ENCODE measurements at regions of chr10 and their contacts with region 1.

Region 1: GRCh38 chr10:68721673-68722335 is 765 bp downstream of the CCAR1 start:
- DNase-seq: no peak
- ATAC-seq: peak; percentile 59
- H3K4me3 ChIP-seq: peak overlapping the region; percentile 89 to 96 (median 93)
- H3K27ac ChIP-seq: peak overlapping the region; percentile 94
- H3K4me1 ChIP-seq: peaks cover 8% of the 10 kb centered on the region
- H3K27me3 ChIP-seq: no peaks in the 10 kb centered on the region; a peak in 1 of 5 replicates
- CTCF ChIP-seq: no peak
- EP300 ChIP-seq: no peak
- POLR2A ChIP-seq: no peak
- RAD21 ChIP-seq: no peak

Region 2: DNA sequence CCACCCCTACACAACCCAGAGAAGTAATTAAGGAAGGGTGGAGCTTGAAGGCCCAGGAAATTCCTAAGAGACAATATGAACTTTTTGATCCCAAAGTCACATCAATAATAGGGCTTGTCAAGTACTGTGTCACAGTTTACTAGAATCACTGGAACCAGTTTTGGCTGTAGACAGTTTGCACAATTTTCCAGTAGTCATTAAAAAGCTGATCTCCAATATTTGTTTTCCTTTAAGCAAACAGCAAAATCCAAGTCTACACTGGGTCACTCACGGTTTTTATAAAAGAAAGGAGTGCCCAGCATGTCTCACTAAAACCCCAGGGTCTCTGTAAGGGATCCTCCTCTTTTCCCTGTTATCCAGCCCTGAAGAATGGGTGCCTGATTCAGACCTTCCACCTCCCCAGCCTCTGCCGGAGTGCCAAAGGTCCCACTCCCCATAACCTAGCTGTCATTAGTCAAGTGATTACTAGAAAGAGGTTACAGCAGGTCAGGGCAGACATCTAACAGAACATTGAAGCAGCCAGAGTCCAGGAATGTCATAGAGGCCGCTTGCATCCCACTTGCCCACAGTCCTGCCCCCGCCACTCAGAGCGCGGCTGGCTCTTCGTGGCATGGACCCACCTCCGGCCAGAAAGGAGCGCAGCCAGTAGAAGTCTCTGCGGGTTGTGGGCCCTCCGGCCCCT is 195.0 kb before region 1 on chr10:
- CTCF ChIA-PET with region 1: no interaction called
- POLR2A ChIA-PET with region 1: no interaction called
- in situ Hi-C with region 1: no loop called
- intact Hi-C with region 1: loop called (anchors 1 kb)
- DNase-seq: peak; percentile 56
- ATAC-seq: peak; percentile 84
- H3K4me3 ChIP-seq: peak overlapping the region; percentile 80 to 88 (median 81)
- H3K27ac ChIP-seq: peak overlapping the region; percentile 93
- H3K4me1 ChIP-seq: peaks cover 18% of the 10 kb centered on the region
- H3K27me3 ChIP-seq: no peaks in the 10 kb centered on the region
- CTCF ChIP-seq: no peak
- EP300 ChIP-seq: no peak
- POLR2A ChIP-seq: no peak
- RAD21 ChIP-seq: no peak; the same call in 1 of the 2 replicates

Region 3: DNA sequence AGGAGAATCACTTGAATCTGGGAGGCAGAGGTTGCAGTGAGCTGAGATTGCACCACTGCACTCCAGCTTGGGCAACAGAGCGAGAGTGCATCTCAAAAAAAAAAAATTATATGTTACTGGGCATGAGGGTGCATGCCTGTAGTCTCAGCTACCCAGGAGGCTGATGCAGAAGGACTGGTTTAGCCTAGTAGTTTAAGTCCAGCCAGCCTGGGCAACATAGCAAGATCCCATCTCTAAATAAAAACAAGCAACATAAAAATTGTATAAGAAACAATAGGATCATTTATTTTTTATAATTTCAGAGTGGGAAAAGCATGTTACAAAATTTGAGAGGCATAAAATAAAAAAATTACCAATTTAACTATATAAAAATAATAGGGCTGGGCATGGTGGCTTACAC is 16.3 kb before region 1 on chr10:
- CTCF ChIA-PET with region 1: no interaction called
- POLR2A ChIA-PET with region 1: no interaction called
- in situ Hi-C with region 1: no loop called
- intact Hi-C with region 1: no loop called
- DNase-seq: no peak
- ATAC-seq: no peak
- H3K4me3 ChIP-seq: no peak overlapping the region
- H3K27ac ChIP-seq: no peak overlapping the region
- H3K4me1 ChIP-seq: no peaks in the 10 kb centered on the region; the same call in 1 of the 2 replicates
- H3K27me3 ChIP-seq: no peaks in the 10 kb centered on the region
- CTCF ChIP-seq: no peak
- EP300 ChIP-seq: no peak
- POLR2A ChIP-seq: no peak
- RAD21 ChIP-seq: no peak

Region 4: DNA sequence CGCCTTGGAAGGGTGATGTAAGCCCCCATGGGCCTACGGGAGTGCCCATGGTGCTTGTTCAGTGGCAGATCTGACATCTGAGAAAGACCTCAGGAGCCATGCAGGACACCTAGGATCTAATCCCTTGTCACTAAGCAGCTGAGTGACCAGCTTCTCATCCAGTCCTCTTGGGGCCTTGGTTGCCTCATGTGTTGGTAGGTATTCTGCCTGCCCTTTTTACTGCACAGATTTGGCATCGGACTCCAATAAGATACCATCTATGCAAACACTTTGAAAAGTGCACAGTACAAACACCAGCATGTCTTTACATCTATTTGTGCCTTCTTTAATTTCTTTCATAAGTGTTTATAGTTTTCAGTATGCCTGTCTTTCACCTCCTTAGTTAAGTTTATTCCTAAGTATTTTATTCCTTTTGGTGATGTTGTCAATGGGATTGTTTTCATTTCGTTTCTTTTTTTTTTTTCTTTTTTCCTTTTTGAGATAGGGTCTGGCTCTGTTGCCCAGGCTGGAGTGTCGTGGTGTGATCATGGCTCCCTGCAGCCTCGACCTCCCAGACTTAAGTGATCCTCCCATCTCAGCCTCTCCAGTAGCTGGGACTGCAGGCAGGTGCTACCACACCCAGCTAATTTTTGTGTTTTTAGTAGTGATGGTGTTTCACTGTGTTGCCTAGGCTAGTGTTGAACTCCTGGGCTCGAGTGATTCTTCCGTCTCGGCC is 116.0 kb after region 1 on chr10:
- CTCF ChIA-PET with region 1: no interaction called
- POLR2A ChIA-PET with region 1: no interaction called
- in situ Hi-C with region 1: no loop called
- intact Hi-C with region 1: no loop called
- DNase-seq: no peak
- ATAC-seq: no peak; the same call in 2 of the 3 replicates
- H3K4me3 ChIP-seq: no peak overlapping the region
- H3K27ac ChIP-seq: no peak overlapping the region
- H3K4me1 ChIP-seq: peaks cover 14% of the 10 kb centered on the region
- H3K27me3 ChIP-seq: no peaks in the 10 kb centered on the region
- CTCF ChIP-seq: no peak
- EP300 ChIP-seq: no peak
- POLR2A ChIP-seq: no peak
- RAD21 ChIP-seq: no peak